Left ventricle myocardium inferior (tissue), 1 donor: ENCODE measurements at regions of chr17 and their contacts with region 1.

Region 1: GRCh38 chr17:71593078-71593477 is 527.7 kb upstream of the SOX9 start:
- DNase-seq: no peak
- H3K4me3 ChIP-seq: no peak overlapping the region
- H3K27ac ChIP-seq: no peak overlapping the region
- H3K4me1 ChIP-seq: no peaks in the 10 kb centered on the region
- H3K27me3 ChIP-seq: no peaks in the 10 kb centered on the region
- CTCF ChIP-seq: no peak

Region 2: DNA sequence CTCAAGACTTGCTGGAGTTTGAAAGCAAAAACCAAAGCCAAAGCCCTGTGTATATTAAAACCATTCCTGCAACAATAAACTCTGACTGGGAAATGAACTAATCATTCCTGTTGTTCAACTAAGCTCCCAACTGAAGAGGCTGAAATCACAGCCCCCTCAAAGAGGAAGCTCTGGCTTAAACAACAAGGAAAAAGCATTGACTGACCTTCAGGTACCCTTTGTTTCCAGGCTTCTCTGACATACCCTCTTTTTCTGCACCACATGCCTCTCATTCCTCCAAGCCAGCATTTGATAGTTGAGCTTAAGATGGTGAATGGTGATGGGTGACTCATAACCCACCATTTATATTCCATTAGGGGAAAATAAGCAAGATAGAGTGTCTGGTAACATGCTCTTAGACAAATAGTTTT is 56.9 kb after region 1 on chr17:
- intact Hi-C with region 1: loop called (anchors 10 kb)
- DNase-seq: no peak
- H3K4me3 ChIP-seq: no peak overlapping the region
- H3K27ac ChIP-seq: no peak overlapping the region
- H3K4me1 ChIP-seq: no peaks in the 10 kb centered on the region
- H3K27me3 ChIP-seq: no peaks in the 10 kb centered on the region
- CTCF ChIP-seq: no peak